ENCODE measurements at regions of chr1 and their contacts with region 1.

Region 1: DNA sequence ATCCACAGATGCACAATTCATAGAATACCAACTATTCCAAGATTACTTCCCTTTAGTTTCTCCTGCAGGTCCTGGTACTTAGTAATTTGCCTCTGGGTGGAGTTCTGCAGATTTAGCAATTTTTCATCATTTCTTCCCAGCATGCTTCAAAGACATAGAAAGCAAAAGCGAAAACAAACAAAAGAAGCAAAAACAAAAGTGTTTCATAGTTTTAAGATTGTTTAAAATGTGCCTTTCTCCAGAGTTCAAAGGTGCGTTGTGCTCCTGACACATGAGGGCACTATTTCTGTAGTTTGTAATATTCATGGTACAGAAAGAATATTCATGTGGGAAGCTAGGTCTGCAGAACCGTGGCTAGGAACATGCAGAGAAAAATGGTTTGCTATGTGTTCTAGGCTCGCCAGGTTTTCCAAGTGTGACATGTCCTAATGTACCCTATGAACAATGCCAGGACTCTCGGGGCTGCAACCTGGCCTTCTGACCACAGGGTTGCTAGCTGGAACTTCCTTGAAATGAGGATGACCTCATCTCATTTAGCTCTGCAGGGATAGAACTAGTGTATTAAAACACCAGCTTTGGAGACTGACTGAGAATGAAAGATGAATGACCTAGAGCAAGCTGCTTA is 30.0 kb upstream of the RCSD1 start:
- DNase-seq: peak in 10 of 14 experiments; percentile 11 to 80 (median 30)
- ATAC-seq: peak; percentile 89
- H3K4me3 ChIP-seq: no peak overlapping the region
- H3K4me3 Mint-ChIP-seq: peak overlapping the region; percentile 39
- H3K27ac ChIP-seq: no peak overlapping the region
- H3K27ac Mint-ChIP-seq: no peak overlapping the region
- H3K4me1 ChIP-seq: peaks cover 35% of the 10 kb centered on the region
- H3K4me1 Mint-ChIP-seq: peaks cover 38% of the 10 kb centered on the region
- H3K27me3 ChIP-seq: no peaks in the 10 kb centered on the region
- H3K27me3 Mint-ChIP-seq: no peaks in the 10 kb centered on the region
- CTCF ChIP-seq: peak; percentile 93

Region 2: DNA sequence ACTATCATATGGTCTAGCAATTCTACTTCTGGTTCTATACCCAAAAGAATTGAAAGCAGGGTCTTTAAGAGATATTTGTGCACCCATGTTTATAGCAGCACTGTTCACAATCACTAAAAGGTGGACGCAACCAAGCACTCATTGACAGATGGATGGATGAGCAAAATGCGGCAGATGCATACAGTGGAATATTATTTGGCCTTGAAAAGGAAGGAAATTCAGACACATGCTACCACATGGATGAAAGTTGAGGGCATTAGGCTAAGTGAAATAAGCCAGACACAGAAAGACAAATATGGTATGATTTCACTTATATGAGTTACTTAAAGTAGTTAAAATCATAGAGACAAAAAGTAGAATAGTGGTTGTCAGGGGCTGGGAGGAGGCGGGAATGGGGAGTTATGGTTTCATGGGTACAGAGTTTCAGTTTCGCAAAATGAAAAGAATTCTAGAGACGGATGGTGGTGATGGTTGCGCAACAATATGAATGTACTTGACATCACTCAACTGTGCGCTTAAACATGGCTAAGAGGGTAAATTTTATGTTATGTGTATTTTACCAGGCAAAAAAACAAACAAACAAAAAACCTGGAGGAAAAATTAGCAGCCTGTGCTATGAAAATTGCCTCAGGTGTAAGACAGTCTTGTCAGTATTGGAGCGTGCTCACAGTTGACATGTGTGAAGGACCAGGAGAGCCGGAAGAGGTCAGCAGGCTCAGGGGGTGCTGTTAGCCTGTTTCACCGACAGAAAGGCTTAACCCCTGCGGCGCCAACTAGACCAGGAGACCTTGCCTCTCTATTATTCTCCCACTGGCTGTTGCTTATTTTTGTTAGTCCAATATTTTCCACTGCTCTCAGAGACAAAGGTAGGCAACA is 108.2 kb before region 1 on chr1:
- CTCF ChIA-PET with region 1: no interaction called
- POLR2A ChIA-PET with region 1: no interaction called
- intact Hi-C with region 1: no loop called
- DNase-seq: peak in 3 of 14 experiments; percentile 61 to 72 (median 71)
- ATAC-seq: peak; percentile 35
- H3K4me3 ChIP-seq: peak overlapping the region; percentile 32
- H3K4me3 Mint-ChIP-seq: peak overlapping the region; percentile 74
- H3K27ac ChIP-seq: peak overlapping the region; percentile 76 to 89
- H3K27ac Mint-ChIP-seq: peak overlapping the region; percentile 100
- H3K4me1 ChIP-seq: peaks cover 98% of the 10 kb centered on the region
- H3K4me1 Mint-ChIP-seq: peaks cover 99% of the 10 kb centered on the region
- H3K27me3 ChIP-seq: no peaks in the 10 kb centered on the region
- H3K27me3 Mint-ChIP-seq: no peaks in the 10 kb centered on the region
- CTCF ChIP-seq: no peak

Region 3: DNA sequence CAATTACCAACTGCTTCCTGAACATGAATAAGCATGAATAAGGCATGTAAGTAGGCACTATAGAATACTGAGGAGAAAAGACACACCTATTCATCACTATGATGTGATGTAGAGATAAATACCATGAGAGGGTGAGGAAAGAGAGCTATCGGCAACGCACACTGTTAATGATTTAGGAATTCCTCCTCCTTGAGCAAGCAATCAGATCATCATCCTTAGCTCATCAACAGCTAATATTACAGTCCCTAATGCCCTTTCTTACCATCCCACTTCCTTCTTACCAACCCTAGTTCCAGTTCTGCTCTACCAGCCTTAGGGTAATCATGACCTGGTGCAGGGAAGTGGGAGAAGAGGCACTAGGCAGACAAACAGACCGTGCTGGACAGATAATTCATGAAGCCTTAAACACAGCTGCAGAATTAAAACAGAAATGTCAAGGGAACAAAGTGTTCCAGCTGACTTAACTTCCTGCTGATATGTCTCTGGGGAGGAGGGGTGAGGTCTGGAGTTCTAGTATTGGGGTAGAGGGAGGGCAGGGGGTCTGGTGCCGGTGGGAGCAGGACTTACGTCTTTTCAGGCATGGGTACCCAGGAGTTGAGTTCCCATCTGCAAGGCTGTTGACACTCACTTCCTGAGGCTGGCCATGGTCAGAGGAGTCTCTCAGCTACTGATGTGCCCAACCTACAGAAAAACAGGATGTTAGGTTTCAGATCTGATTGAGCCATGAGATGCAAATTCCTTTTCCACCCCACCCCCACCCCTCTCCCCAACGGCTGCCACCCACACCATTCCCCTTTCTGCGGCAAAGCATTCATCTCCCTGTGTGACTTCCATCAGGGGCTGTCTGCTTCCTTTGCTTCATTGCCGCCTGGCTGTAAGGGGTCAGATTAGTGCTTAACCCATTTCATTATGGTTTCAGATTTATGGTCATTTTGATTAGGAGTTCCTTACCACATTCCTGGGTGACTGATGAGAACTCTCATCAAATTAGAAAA is 17.4 kb after region 1 on chr1:
- CTCF ChIA-PET with region 1: interaction called, 7 read pairs
- POLR2A ChIA-PET with region 1: interaction called, 24 read pairs
- intact Hi-C with region 1: no loop called
- DNase-seq: peak in 5 of 14 experiments; percentile 19 to 68 (median 49)
- ATAC-seq: peak; percentile 46
- H3K4me3 ChIP-seq: peak overlapping the region; percentile 24
- H3K4me3 Mint-ChIP-seq: peak overlapping the region; percentile 69
- H3K27ac ChIP-seq: peak overlapping the region; percentile 42 to 47
- H3K27ac Mint-ChIP-seq: peak overlapping the region; percentile 62
- H3K4me1 ChIP-seq: peaks cover 54% of the 10 kb centered on the region
- H3K4me1 Mint-ChIP-seq: peaks cover 58% of the 10 kb centered on the region
- H3K27me3 ChIP-seq: no peaks in the 10 kb centered on the region
- H3K27me3 Mint-ChIP-seq: no peaks in the 10 kb centered on the region
- CTCF ChIP-seq: no peak

Region 4: GRCh38 chr1:167635156-167635648 is 35.1 kb after region 1 on chr1:
- CTCF ChIA-PET with region 1: interaction called, 76 read pairs
- POLR2A ChIA-PET with region 1: interaction called, 116 read pairs
- intact Hi-C with region 1: loop called (anchors 1 kb)
- DNase-seq: no peak
- ATAC-seq: no peak
- H3K4me3 ChIP-seq: no peak overlapping the region
- H3K4me3 Mint-ChIP-seq: no peak overlapping the region
- H3K27ac ChIP-seq: peak overlapping the region; percentile 59 to 90
- H3K27ac Mint-ChIP-seq: peak overlapping the region; percentile 93
- H3K4me1 ChIP-seq: peaks cover 84% of the 10 kb centered on the region
- H3K4me1 Mint-ChIP-seq: peaks cover 88% of the 10 kb centered on the region
- H3K27me3 ChIP-seq: no peaks in the 10 kb centered on the region
- H3K27me3 Mint-ChIP-seq: no peaks in the 10 kb centered on the region
- CTCF ChIP-seq: no peak

Region 5: GRCh38 chr1:167641786-167642500 is 41.9 kb after region 1 on chr1:
- CTCF ChIA-PET with region 1: interaction called, 76 read pairs
- POLR2A ChIA-PET with region 1: interaction called, 116 read pairs
- intact Hi-C with region 1: loop called (anchors 1 kb)
- DNase-seq: peak in 4 of 14 experiments; percentile 33 to 66 (median 54)
- ATAC-seq: peak; percentile 27
- H3K4me3 ChIP-seq: no peak overlapping the region
- H3K4me3 Mint-ChIP-seq: peak overlapping the region; percentile 1
- H3K27ac ChIP-seq: peak overlapping the region in 1 of 2 donors; percentile 50
- H3K27ac Mint-ChIP-seq: peak overlapping the region; percentile 77
- H3K4me1 ChIP-seq: peaks cover 98% of the 10 kb centered on the region
- H3K4me1 Mint-ChIP-seq: peaks cover 90% of the 10 kb centered on the region
- H3K27me3 ChIP-seq: no peaks in the 10 kb centered on the region
- H3K27me3 Mint-ChIP-seq: no peaks in the 10 kb centered on the region
- CTCF ChIP-seq: no peak

Region 6: GRCh38 chr1:167687919-167688519 is 88.0 kb after region 1 on chr1:
- CTCF ChIA-PET with region 1: interaction called, 63 read pairs
- POLR2A ChIA-PET with region 1: interaction called, 29 read pairs
- intact Hi-C with region 1: loop called (anchors 1 kb)
- DNase-seq: peak; percentile 40 to 89 (median 74)
- ATAC-seq: peak; percentile 85
- H3K4me3 ChIP-seq: no peak overlapping the region
- H3K4me3 Mint-ChIP-seq: no peak overlapping the region
- H3K27ac ChIP-seq: no peak overlapping the region
- H3K27ac Mint-ChIP-seq: peak overlapping the region; percentile 21
- H3K4me1 ChIP-seq: peaks cover 16% of the 10 kb centered on the region
- H3K4me1 Mint-ChIP-seq: peaks cover 11% of the 10 kb centered on the region
- H3K27me3 ChIP-seq: no peaks in the 10 kb centered on the region
- H3K27me3 Mint-ChIP-seq: no peaks in the 10 kb centered on the region
- CTCF ChIP-seq: peak; percentile 92

Region 7: GRCh38 chr1:167803358-167804207 is 203.5 kb after region 1 on chr1:
- CTCF ChIA-PET with region 1: no interaction called
- POLR2A ChIA-PET with region 1: no interaction called
- intact Hi-C with region 1: loop called in 1 of 2 experiments (anchors 2 kb)
- DNase-seq: peak; percentile 70 to 93 (median 78)
- ATAC-seq: peak; percentile 79
- H3K4me3 ChIP-seq: no peak overlapping the region
- H3K4me3 Mint-ChIP-seq: peak overlapping the region; percentile 60
- H3K27ac ChIP-seq: no peak overlapping the region
- H3K27ac Mint-ChIP-seq: no peak overlapping the region
- H3K4me1 ChIP-seq: peaks cover 21% of the 10 kb centered on the region
- H3K4me1 Mint-ChIP-seq: peaks cover 30% of the 10 kb centered on the region
- H3K27me3 ChIP-seq: no peaks in the 10 kb centered on the region
- H3K27me3 Mint-ChIP-seq: no peaks in the 10 kb centered on the region
- CTCF ChIP-seq: peak; percentile 95

Region 8: GRCh38 chr1:168082008-168082876 is 482.2 kb after region 1 on chr1:
- CTCF ChIA-PET with region 1: interaction called, 3 read pairs
- POLR2A ChIA-PET with region 1: no interaction called
- intact Hi-C with region 1: loop called in 1 of 2 experiments (anchors 5 kb)
- DNase-seq: peak; percentile 43 to 76 (median 55)
- ATAC-seq: peak; percentile 92
- H3K4me3 ChIP-seq: no peak overlapping the region
- H3K4me3 Mint-ChIP-seq: no peak overlapping the region
- H3K27ac ChIP-seq: no peak overlapping the region
- H3K27ac Mint-ChIP-seq: no peak overlapping the region
- H3K4me1 ChIP-seq: peaks cover 5% of the 10 kb centered on the region
- H3K4me1 Mint-ChIP-seq: no peaks in the 10 kb centered on the region
- H3K27me3 ChIP-seq: no peaks in the 10 kb centered on the region
- H3K27me3 Mint-ChIP-seq: no peaks in the 10 kb centered on the region
- CTCF ChIP-seq: peak; percentile 92

Measured in CD4-positive, alpha-beta T cell (primary cell).